ENCODE measurements at regions of chr19 and their contacts with region 1.

Region 1: GRCh38 chr19:23249911-23250649 is at the start of gene ZNF724:
- DNase-seq: peak; percentile 80
- ATAC-seq: peak; percentile 99
- H3K4me3 ChIP-seq: peak within 1 kb of the TSS; percentile 77 to 88
- H3K27ac ChIP-seq: peak within 1 kb of the TSS; percentile 87
- H3K4me1 ChIP-seq: no peaks in the 10 kb centered on the region
- H3K27me3 ChIP-seq: no peaks in the 10 kb centered on the region
- CTCF ChIP-seq: no peak
- total RNA-seq, gene ZNF724: 11.0 TPM

Region 2: GRCh38 chr19:23033721-23034120 is 216.4 kb before region 1 on chr19:
- CTCF ChIA-PET with region 1: no interaction called
- POLR2A ChIA-PET with region 1: interaction called, 10 read pairs
- in situ Hi-C with region 1: no loop called
- intact Hi-C with region 1: no loop called
- DNase-seq: no peak
- ATAC-seq: no peak
- H3K4me3 ChIP-seq: no peak overlapping the region
- H3K27ac ChIP-seq: no peak overlapping the region
- H3K4me1 ChIP-seq: no peaks in the 10 kb centered on the region
- H3K27me3 ChIP-seq: no peaks in the 10 kb centered on the region
- CTCF ChIP-seq: no peak